ENCODE measurements at regions of chr12 and their contacts with region 1.

Region 1: GRCh38 chr12:123713398-123713797 is 1.2 kb downstream of the ATP6V0A2 start:
- DNase-seq: peak; percentile 26
- H3K4me3 Mint-ChIP-seq: peak overlapping the region; percentile 80
- H3K27ac Mint-ChIP-seq: peak overlapping the region; percentile 83
- H3K4me1 Mint-ChIP-seq: peaks cover 42% of the 10 kb centered on the region
- H3K27me3 Mint-ChIP-seq: no peaks in the 10 kb centered on the region

Region 2: DNA sequence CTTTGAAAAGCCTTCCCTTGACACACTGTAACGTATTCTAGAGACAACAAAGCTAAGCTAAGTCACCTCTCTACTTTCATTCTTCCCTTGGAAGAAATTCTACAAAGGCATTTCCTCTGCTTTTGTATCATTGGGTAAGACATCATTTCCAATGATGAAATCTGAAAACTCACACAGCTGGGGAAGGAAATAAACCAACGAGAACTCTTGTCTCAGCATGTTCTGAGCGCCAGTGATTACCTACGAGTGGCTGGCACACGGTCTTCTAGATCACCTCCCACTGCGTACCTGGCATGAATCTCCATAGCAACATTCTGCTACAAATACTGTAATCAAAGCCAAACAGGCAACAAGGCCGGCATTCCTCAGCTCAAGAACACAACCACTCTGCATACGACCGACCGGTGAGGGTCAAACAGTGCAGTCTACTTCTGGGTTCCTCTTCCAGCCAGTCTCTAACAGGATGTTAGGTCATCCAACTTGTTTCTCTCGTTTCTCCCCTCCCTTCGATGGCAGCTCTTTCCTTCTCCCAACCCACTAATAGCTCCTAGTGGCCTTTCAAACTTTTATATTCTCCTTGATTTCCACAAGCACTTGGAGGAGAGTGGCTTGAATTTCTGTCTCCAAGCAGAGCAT is 825.0 kb before region 1 on chr12:
- CTCF ChIA-PET with region 1: no interaction called
- intact Hi-C with region 1: loop called (anchors 2 kb)
- DNase-seq: peak; percentile 72
- H3K4me3 Mint-ChIP-seq: peak overlapping the region; percentile 77
- H3K27ac Mint-ChIP-seq: peak overlapping the region; percentile 91
- H3K4me1 Mint-ChIP-seq: peaks cover 79% of the 10 kb centered on the region
- H3K27me3 Mint-ChIP-seq: peaks cover 3% of the 10 kb centered on the region

Region 3: DNA sequence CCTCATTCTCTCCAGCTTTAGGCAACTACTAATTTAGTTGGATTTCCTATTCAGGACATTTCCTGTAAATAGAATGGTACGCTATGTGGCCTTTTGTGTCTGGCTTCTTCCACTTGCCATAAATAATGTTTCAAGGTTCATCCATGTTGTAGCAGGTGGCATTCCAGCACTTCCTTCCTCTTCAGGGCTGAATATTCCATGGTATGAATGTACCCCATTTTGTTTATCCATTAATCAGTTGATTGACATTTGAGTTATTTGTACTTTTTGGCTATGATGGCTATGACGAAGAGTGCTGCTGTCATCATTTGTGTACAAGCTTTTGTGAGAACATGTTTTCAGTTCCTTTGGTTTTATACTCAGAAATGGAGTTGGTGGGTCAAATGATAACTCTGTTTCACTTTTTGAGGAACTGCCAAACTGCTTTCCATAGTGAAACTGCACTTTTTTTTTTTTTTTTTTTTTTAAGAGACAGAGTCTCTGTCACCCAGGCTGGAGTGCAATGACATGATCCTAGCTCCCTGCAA is 435.2 kb before region 1 on chr12:
- CTCF ChIA-PET with region 1: no interaction called
- intact Hi-C with region 1: loop called (anchors 2 kb)
- DNase-seq: peak; percentile 56
- H3K4me3 Mint-ChIP-seq: no peak overlapping the region
- H3K27ac Mint-ChIP-seq: no peak overlapping the region
- H3K4me1 Mint-ChIP-seq: peaks cover 6% of the 10 kb centered on the region
- H3K27me3 Mint-ChIP-seq: no peaks in the 10 kb centered on the region

Region 4: DNA sequence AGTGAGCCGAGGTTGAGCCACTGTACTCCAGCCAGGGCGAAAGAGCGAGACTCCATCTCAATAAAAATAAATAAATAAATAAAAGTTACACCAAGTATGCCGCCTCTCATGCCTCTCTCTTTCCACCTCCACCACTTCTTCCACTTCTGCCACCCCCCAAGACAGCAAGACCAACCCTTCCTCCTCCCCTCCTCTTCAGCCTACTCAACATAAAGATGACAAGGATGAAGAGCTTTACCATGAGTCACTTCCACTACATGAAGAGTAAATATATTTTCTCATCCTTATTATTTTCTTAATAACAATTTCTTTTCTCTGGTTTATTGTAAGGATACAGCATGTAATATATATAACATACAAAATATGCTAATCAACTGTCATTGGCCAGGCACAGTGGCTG is 132.6 kb before region 1 on chr12:
- CTCF ChIA-PET with region 1: no interaction called
- intact Hi-C with region 1: loop called (anchors 5 kb)
- DNase-seq: no peak
- H3K4me3 Mint-ChIP-seq: no peak overlapping the region
- H3K27ac Mint-ChIP-seq: no peak overlapping the region
- H3K4me1 Mint-ChIP-seq: peaks cover 22% of the 10 kb centered on the region
- H3K27me3 Mint-ChIP-seq: no peaks in the 10 kb centered on the region

Region 5: GRCh38 chr12:123801573-123802178 is 88.3 kb after region 1 on chr12:
- CTCF ChIA-PET with region 1: no interaction called
- intact Hi-C with region 1: no loop called
- DNase-seq: no peak
- H3K4me3 Mint-ChIP-seq: no peak overlapping the region
- H3K27ac Mint-ChIP-seq: no peak overlapping the region
- H3K4me1 Mint-ChIP-seq: no peaks in the 10 kb centered on the region
- H3K27me3 Mint-ChIP-seq: no peaks in the 10 kb centered on the region

Region 6: GRCh38 chr12:123972457-123973401 is 259.3 kb after region 1 on chr12 and contains the starts of genes CCDC92 and ZNF664:
- CTCF ChIA-PET with region 1: no interaction called
- intact Hi-C with region 1: loop called (anchors 5 kb)
- DNase-seq: peak; percentile 94
- H3K4me3 Mint-ChIP-seq: peak within 1 kb of the TSS; percentile 88
- H3K27ac Mint-ChIP-seq: peak within 1 kb of the TSS; percentile 61
- H3K4me1 Mint-ChIP-seq: peaks cover 33% of the 10 kb centered on the region
- H3K27me3 Mint-ChIP-seq: no peaks in the 10 kb centered on the region
- total RNA-seq, gene CCDC92: 3.3 to 3.7 TPM
- total RNA-seq, gene ZNF664: 42.2 to 46.0 TPM

Region 7: DNA sequence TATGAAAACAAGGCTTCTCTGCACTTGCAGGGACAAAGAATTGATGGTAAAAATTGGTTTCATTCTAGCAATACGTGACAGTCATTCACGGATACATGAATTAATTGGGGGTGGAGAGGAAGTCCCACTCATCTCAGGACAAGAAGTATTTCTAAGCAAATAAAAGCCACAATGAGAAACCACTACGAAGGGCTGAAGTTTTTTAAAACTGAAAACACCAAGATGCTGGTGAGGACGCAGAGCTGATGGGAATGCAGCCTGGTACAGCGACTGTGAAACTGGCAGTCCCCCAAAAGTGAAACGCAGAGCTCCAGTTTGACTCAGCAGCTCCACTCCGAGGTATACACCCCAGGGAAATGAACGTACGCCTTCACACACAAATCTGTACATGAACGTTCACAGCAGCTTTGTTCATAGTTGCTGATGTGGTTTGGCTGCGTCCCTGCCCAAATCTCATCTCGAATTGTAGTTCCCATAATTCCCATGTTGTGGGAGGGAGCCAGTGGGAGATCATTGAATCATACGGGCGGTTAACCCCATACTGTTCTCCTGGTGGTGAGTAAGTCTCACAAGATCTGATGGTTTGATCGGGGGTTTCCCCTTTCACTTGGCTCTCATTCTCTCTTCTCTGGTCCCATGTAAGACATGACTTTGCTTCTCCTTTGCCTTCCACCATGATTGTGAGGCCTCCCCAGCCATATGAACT is 1061.2 kb after region 1 on chr12:
- CTCF ChIA-PET with region 1: no interaction called
- intact Hi-C with region 1: loop called (anchors 1 kb)
- DNase-seq: peak; percentile 96
- H3K4me3 Mint-ChIP-seq: no peak overlapping the region
- H3K27ac Mint-ChIP-seq: peak overlapping the region; percentile 93
- H3K4me1 Mint-ChIP-seq: peaks cover 40% of the 10 kb centered on the region
- H3K27me3 Mint-ChIP-seq: peaks cover 15% of the 10 kb centered on the region

Measured in activated naive CD4-positive, alpha-beta T cell treated with anti-CD3 and anti-CD28 coated beads for 36 hours (primary cell).